HCT116 (cell line): ENCODE measurements at regions of chr3 and their contacts with region 1.

Region 1: GRCh38 chr3:101676765-101677435 is at the start of gene ZBTB11:
- DNase-seq: peak; percentile 100
- ATAC-seq: peak; percentile 77
- H3K4me3 ChIP-seq: peak within 1 kb of the TSS; percentile 97
- H3K27ac ChIP-seq: peak within 1 kb of the TSS; percentile 78
- H3K4me1 ChIP-seq: peaks cover 7 to 23% of the 10 kb centered on the region in 2 experiments; a peak in 3 of 4 replicates
- H3K27me3 ChIP-seq: no peaks in the 10 kb centered on the region
- CTCF ChIP-seq: peak; percentile 26 to 61 (median 51); a peak in 5 of 6 replicates
- POLR2A ChIP-seq: no peak
- RAD21 ChIP-seq: peak; percentile 47; the same call in 1 of the 2 replicates
- total RNA-seq, gene ZBTB11: 20.4 TPM

Region 2: DNA sequence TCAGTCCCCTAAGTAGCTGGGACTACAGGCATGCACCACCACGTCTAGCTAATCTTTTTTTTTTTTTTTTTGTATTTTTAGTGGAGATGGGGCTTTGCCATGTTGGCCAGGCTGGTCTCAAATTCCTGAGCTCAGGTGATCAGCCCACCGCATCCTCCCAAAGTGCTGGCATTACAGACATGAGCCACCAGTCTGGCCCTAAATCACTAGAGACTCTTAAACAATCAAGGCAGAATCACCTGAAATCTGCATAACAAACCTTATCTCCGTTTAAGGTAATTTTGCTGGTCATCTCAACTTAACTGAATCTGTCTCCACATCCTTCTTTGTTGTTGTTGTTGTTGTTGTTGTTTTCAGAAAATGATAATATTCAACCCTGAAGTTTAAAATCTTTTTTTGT is 120.8 kb before region 1 on chr3:
- CTCF ChIA-PET with region 1: no interaction called
- POLR2A ChIA-PET with region 1: no interaction called
- RAD21 ChIA-PET with region 1: no interaction called
- intact Hi-C with region 1: no loop called
- DNase-seq: no peak
- ATAC-seq: no peak
- H3K4me3 ChIP-seq: no peak overlapping the region
- H3K27ac ChIP-seq: no peak overlapping the region
- H3K4me1 ChIP-seq: peaks cover 1 to 4% of the 10 kb centered on the region in 2 experiments; a peak in 2 of 4 replicates
- H3K27me3 ChIP-seq: peaks cover 19% of the 10 kb centered on the region; the same call in 1 of the 2 replicates
- CTCF ChIP-seq: no peak
- POLR2A ChIP-seq: no peak
- RAD21 ChIP-seq: no peak

Region 3: GRCh38 chr3:101703169-101703568 is 26.3 kb after region 1 on chr3:
- CTCF ChIA-PET with region 1: interaction called, 11 read pairs
- POLR2A ChIA-PET with region 1: no interaction called
- RAD21 ChIA-PET with region 1: no interaction called
- intact Hi-C with region 1: no loop called
- DNase-seq: peak; percentile 52
- ATAC-seq: peak; percentile 73
- H3K4me3 ChIP-seq: peak overlapping the region; percentile 6 to 27; a peak in 2 of 4 replicates
- H3K27ac ChIP-seq: no peak overlapping the region
- H3K4me1 ChIP-seq: peaks cover 7 to 27% of the 10 kb centered on the region in 2 experiments
- H3K27me3 ChIP-seq: no peaks in the 10 kb centered on the region
- CTCF ChIP-seq: no peak
- POLR2A ChIP-seq: no peak
- RAD21 ChIP-seq: no peak